Calu3 (cell line): ENCODE measurements at regions of chr4 and their contacts with region 1.

Region 1: DNA sequence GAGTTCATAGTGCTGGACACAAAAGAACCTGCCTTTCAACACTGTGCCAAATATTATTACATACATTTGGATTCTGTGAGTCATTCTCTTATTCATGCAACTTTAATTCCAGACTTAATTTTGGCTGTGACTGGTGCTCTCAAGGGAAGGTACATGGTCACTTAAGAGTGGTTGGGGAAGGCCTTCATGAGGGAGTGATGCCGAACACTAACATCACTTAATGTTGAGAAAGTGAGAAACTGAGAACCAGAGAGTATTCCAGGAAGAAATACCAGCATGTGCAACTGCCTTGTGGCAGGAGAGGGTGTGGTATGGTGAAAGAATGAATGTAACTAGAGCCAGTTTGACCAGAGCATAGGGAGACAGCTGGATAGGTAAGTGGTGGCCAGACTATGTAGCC is 41.5 kb upstream of the FHDC1 start:
- DNase-seq: no peak
- H3K4me3 Mint-ChIP-seq: no peak overlapping the region
- H3K27ac Mint-ChIP-seq: no peak overlapping the region
- H3K4me1 Mint-ChIP-seq: peaks cover 9% of the 10 kb centered on the region
- H3K27me3 Mint-ChIP-seq: no peaks in the 10 kb centered on the region
- CTCF ChIP-seq: no peak

Region 2: DNA sequence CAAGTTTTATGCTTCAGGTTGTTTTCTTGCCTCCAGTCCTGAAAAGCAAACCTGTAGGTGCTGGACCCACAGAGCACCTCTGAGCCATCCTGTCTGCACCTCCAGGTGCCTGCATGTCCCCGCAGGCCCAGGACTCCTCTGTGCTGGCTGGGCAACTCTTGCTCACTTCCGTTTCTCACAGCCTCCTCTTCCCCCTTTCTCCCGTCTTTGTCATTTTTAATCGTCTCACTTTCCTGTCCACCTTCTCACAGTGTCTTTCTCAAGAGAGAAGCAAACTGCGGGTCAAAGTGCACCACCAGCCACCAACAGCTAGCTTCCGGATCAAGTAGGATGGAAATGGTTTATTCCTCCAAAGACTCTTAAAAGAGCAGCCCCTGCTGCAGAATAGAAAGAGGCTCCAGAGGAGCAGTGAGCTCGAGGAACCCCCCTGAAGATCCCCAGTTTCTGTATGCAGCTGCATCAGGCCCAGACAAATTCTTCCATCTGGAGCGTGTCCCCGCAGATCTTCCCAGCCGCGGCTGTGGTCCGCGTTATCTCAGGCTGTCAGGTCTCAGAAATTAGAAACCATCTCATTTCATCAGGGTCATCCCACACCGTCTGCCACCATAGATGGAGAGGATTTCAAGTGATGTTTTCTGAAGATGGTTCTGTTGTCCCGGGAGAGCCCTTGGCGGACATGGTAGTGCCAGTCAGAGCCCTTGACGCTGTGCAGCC is 129.2 kb after region 1 on chr4:
- CTCF ChIA-PET with region 1: no interaction called
- intact Hi-C with region 1: no loop called
- DNase-seq: no peak
- H3K4me3 Mint-ChIP-seq: no peak overlapping the region
- H3K27ac Mint-ChIP-seq: no peak overlapping the region
- H3K4me1 Mint-ChIP-seq: no peaks in the 10 kb centered on the region
- H3K27me3 Mint-ChIP-seq: peaks cover 3% of the 10 kb centered on the region
- CTCF ChIP-seq: no peak

Region 3: DNA sequence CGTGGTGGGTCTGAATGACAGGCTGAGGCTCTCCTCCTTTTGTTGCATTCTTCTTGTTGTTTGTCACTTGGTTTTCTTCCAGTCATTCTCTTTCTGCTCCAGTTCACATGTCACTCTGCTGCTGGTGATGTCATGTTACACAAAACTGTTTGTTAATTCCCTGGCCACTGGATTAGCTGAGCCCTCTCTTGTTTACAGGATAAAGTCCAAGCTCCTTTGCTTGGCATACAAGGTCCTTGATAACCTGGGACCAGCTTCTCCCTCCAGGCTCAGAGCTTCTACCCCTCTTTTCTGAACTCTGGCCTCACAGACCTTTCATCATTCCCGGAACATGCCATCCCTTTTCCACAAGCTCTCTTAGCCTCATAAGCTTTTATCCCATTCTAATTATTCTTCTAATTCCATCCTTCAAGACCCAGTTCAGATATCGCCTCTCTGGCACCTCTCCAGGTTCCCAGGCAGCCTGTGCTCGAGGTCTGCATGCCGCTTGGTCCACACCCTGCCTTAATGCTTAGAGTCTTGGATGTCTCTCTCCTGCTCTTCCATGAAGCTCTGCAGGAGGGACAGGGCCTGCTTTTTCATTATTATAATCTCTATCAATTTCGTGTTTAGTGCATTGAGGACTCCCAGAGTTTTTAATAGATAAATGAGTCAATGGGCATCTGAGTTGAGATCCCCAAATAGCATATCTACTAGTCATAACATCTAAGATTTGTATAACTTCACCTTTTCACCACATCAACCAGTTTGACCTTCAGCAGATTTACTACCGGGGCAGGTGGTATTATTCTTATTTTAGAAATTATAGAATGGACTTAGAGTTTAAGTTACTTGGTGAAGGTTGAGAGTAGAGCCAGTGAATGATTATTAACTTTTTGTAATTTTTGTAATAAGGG is 670.2 kb after region 1 on chr4:
- CTCF ChIA-PET with region 1: interaction called, 13 read pairs
- intact Hi-C with region 1: no loop called
- DNase-seq: no peak
- H3K4me3 Mint-ChIP-seq: no peak overlapping the region
- H3K27ac Mint-ChIP-seq: no peak overlapping the region
- H3K4me1 Mint-ChIP-seq: peaks cover 9% of the 10 kb centered on the region
- H3K27me3 Mint-ChIP-seq: no peaks in the 10 kb centered on the region
- CTCF ChIP-seq: no peak